AG04449 (cell line): ENCODE measurements at regions of chr2 and their contacts with region 1.

Region 1: DNA sequence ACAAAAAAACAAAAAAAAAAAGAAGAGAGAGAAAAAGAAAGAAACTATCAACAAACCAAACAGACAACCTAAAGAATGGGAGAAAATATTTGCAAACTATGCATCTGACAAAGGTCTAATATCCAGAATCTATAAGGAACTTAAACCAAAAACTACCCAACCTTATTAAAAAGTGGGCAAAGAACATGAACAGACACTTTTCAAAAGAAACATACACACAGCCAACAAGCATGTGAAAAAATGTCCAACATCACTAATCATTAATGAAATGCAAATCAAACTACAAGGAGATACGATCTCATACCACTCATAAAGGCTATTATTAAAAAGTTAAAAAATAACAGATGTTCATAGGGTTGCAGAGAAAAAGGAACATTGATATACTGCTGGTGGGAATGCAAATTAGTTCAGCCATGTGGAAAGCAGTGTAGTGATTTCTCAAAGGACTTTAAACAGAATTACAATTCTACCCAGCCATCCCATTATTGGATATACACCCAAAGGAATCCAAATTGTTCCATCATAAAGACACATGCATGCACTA is 7.2 kb upstream of the POLE4 start:
- DNase-seq: no peak
- H3K4me3 ChIP-seq: no peak overlapping the region
- CTCF ChIP-seq: no peak

Region 2: DNA sequence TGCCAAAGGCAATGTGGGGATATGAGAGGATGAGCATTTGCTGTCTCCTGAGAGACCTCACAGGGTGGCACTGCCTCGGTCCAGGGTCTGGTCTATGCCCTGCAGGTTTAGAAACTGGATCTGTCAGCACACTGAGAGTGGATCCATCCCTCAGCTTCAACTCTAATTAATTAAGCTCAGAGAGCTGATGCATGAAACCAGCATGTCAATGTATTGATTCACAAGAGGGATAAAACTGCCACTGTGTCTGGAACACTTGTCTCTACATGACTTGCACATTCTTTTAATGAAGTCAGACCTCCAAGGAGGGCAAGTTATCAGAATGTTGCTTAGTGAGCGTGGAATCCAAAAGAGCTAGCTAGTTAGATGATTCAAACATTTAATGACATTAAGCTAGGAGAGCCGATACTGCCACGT is 15.3 kb before region 1 on chr2:
- CTCF ChIA-PET with region 1: interaction called, 10 read pairs
- POLR2A ChIA-PET with region 1: no interaction called
- DNase-seq: no peak
- H3K4me3 ChIP-seq: no peak overlapping the region
- CTCF ChIP-seq: no peak